Activated naive CD4-positive, alpha-beta T cell treated with anti-CD3 and anti-CD28 coated beads, Interleukin-2, amount 10 ng/mL, durations not matched to agents 7 days and 5 days (primary cell): ENCODE measurements at regions of chr7 and their contacts with region 1.

Region 1: DNA sequence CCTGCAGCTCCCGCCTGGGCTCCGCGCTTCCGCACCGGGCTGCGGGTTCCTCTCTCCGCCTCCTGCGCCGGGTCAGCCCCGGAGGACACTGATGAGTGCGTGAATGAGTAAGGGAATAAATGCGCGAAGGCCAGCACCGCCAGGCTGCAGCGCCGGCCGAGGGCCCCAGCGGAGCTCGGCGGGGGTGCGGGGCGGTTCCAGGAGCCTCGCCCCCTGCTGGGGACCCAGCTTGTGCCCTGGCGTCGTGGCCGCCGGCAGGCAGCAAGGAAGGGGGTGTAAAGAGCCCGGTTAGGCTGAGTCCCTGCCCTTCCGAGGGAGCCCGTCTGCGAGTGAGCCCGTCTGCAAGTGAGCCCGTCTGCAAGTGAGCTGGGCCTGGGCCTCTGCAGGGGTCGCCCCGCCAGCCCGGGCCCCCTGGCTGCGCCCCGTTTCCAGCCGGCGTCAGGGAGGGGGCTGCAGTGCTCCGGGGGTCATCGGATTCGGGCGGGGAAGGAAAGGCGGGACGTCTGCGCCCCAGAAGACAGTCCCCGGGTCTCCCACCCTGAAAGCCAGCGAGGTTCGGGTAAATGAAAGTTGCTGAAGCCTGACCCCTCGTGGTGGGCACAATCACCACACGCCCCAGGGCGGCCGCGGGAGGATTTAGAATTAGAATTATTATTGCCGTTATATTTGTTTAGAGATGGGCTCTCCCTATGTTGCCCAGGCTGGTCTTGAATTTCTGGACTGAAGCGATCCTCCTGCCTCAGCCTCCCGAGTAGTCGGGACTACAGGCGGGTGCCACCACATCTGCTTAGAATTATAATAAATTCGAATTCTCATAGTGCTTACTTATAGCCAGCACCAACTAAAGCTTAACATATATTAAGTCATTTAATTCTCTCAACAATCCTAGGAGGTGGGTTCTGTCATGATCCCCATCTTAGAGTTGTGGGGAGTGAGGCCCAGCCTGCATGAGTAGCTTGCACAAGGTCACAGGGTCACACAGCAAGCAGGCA is 8.6 kb upstream of the CRYGN start:
- DNase-seq: peak; percentile 85
- H3K4me3 Mint-ChIP-seq: peak overlapping the region; percentile 70
- H3K27ac Mint-ChIP-seq: no peak overlapping the region
- H3K4me1 Mint-ChIP-seq: peaks cover 9% of the 10 kb centered on the region
- H3K27me3 Mint-ChIP-seq: peaks cover 60% of the 10 kb centered on the region

Region 2: DNA sequence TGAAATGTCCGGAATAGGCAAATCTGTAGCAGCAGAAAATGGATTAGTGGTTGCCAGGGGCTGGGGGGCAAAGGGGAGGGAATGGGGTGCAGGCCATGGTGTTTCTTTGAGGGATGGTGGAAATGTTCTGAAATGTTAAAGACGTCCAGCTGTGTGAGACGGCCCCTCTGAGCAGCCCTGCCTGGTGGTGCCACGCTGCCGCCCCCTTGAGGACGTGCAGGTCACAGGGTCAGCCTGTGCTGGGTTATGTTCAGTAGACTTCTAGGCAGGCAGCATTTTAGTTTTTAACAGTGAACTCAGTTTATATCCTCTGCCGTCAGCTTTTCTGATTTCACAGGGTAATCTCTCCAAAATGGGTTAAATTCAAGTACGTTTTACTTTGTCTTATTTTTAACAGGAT is 97.5 kb before region 1 on chr7:
- CTCF ChIA-PET with region 1: interaction called, 39 read pairs
- DNase-seq: peak; percentile 46
- H3K4me3 Mint-ChIP-seq: peak overlapping the region; percentile 63
- H3K27ac Mint-ChIP-seq: peak overlapping the region; percentile 94
- H3K4me1 Mint-ChIP-seq: peaks cover 52% of the 10 kb centered on the region
- H3K27me3 Mint-ChIP-seq: no peaks in the 10 kb centered on the region

Region 3: DNA sequence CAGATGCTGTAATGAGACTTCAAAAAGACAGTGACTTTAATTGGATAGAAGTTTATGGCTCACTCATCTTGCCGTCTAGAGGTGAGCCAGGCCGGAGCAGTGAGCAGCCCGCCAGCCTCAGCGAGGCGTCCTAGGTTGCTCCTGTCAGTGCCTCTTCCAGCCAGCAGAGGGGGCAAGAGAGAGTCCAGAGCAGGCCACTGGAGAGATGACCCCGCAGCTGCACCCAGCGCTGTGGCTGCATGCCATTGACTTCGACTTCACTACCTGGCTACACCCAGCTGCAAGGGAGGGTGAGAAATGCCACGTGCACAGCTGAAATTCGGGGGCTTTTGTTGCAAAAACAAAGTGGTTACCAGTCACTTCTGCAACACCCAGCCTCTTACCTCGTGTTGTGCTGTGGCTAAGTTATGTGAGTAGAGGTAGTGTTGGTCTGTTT is 80.4 kb before region 1 on chr7:
- CTCF ChIA-PET with region 1: interaction called, 196 read pairs
- DNase-seq: peak; percentile 85
- H3K4me3 Mint-ChIP-seq: no peak overlapping the region
- H3K27ac Mint-ChIP-seq: no peak overlapping the region
- H3K4me1 Mint-ChIP-seq: peaks cover 11% of the 10 kb centered on the region
- H3K27me3 Mint-ChIP-seq: no peaks in the 10 kb centered on the region

Region 4: GRCh38 chr7:151397026-151397425 is 51.5 kb before region 1 on chr7:
- CTCF ChIA-PET with region 1: interaction called, 12 read pairs
- DNase-seq: no peak
- H3K4me3 Mint-ChIP-seq: no peak overlapping the region
- H3K27ac Mint-ChIP-seq: no peak overlapping the region
- H3K4me1 Mint-ChIP-seq: no peaks in the 10 kb centered on the region
- H3K27me3 Mint-ChIP-seq: peaks cover 15% of the 10 kb centered on the region

Region 5: GRCh38 chr7:151432791-151433521 is 15.6 kb before region 1 on chr7:
- CTCF ChIA-PET with region 1: interaction called, 33 read pairs
- DNase-seq: peak; percentile 78
- H3K4me3 Mint-ChIP-seq: peak overlapping the region; percentile 37
- H3K27ac Mint-ChIP-seq: peak overlapping the region; percentile 88
- H3K4me1 Mint-ChIP-seq: peaks cover 50% of the 10 kb centered on the region
- H3K27me3 Mint-ChIP-seq: peaks cover 19% of the 10 kb centered on the region